Caco-2 (cell line): ENCODE measurements at regions of chr5 and their contacts with region 1.

Region 1: GRCh38 chr5:65925601-65926275 is 637 bp upstream of the ERBIN start:
- DNase-seq: peak; percentile 91 to 92
- H3K4me3 ChIP-seq: peak overlapping the region; percentile 98
- H3K4me3 Mint-ChIP-seq: peak overlapping the region; percentile 84
- H3K27ac Mint-ChIP-seq: peak overlapping the region; percentile 97
- H3K4me1 ChIP-seq: peaks cover 43% of the 10 kb centered on the region
- H3K4me1 Mint-ChIP-seq: peaks cover 31% of the 10 kb centered on the region
- H3K27me3 ChIP-seq: no peaks in the 10 kb centered on the region
- H3K27me3 Mint-ChIP-seq: no peaks in the 10 kb centered on the region
- CTCF ChIP-seq: peak; percentile 21 to 47

Region 2: DNA sequence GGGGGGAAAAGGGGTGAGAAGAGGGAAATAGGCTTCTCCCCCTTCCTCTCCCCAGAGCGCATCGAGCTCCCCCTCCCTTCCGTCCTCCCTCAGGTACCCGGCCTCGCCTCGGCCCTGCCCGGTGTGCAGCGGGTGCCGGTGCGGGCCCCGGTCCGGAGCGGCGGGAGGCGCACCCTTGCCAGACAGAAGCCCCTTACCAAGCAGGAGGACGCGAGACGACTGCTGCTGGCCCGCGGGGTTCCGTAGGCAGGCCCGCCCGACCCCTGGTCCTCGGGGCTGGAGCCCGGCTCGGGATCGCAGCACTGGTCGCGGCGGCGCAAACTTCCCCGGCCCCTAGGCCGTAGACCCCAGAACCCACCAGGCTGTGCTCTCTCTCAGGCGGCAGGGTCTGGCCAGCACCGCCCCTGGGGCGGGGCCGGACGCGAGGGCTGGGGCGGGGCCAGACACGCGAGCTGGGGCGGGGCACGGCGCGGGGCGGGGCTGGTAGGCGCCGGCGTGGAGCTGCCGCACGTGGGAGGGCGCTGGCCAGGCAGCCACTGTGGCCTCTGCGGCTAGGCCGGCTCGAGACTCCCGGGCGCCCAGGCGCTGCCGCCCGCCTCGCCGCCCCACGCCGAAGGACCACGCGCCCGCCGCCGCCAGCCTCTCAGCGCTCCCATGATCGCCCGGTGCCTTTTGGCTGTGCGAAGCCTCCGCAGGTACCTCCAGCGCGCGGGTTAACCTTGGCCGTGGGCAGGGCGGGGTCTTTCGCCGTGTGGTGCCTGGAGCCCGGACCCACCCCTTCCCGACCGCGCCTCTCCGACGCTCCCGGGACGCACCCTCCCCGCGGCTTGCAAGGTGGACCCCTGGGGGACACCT is 203.8 kb before region 1 on chr5 and contains the starts of genes NLN and SGTB:
- CTCF ChIA-PET with region 1: no interaction called
- POLR2A ChIA-PET with region 1: no interaction called
- intact Hi-C with region 1: loop called (anchors 2 kb)
- DNase-seq: peak; percentile 82 to 92
- H3K4me3 ChIP-seq: peak within 1 kb of the TSS; percentile 98
- H3K4me3 Mint-ChIP-seq: peak within 1 kb of the TSS; percentile 80
- H3K27ac Mint-ChIP-seq: peak within 1 kb of the TSS; percentile 77
- H3K4me1 ChIP-seq: peaks cover 14% of the 10 kb centered on the region
- H3K4me1 Mint-ChIP-seq: peaks cover 11% of the 10 kb centered on the region
- H3K27me3 ChIP-seq: no peaks in the 10 kb centered on the region
- H3K27me3 Mint-ChIP-seq: no peaks in the 10 kb centered on the region
- CTCF ChIP-seq: no peak
- total RNA-seq, gene NLN: 34.8 and 36.0 TPM in 2 replicates
- total RNA-seq, gene SGTB: 12.0 and 13.0 TPM in 2 replicates

Region 3: DNA sequence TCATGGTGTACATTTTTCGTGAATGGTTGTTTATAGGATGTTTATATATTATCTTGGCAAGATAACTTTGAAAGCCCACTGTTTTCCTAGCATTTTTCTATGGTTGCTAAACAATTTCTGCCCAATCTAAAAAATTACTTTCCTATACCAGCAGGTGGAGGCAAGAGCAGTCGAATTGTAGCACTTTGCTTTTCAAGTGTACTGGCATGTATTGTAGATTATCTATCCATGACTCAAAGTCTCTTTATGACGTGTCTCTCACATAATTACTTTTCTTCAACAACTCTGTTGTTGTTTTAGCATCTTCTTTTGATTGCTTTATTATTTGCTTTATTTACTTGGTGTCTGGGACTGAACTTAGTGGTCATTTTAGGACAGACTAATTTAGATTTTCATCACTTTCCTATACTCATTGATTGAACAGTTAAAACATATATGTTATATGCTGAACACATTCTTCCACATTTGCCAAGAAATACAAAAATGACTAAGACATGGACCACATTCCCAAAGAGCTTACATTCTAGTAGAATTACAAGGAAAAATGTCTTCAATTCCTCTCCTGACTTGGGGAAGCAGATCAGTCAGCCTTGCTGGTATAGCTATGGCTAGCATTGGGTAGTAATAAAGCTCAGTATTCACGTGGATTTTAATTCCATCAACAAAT is 183.0 kb before region 1 on chr5:
- CTCF ChIA-PET with region 1: no interaction called
- POLR2A ChIA-PET with region 1: no interaction called
- intact Hi-C with region 1: loop called (anchors 1 kb)
- DNase-seq: peak; percentile 42 to 47
- H3K4me3 ChIP-seq: no peak overlapping the region
- H3K4me3 Mint-ChIP-seq: no peak overlapping the region
- H3K27ac Mint-ChIP-seq: no peak overlapping the region
- H3K4me1 ChIP-seq: no peaks in the 10 kb centered on the region
- H3K4me1 Mint-ChIP-seq: peaks cover 22% of the 10 kb centered on the region
- H3K27me3 ChIP-seq: no peaks in the 10 kb centered on the region
- H3K27me3 Mint-ChIP-seq: no peaks in the 10 kb centered on the region
- CTCF ChIP-seq: peak; percentile 55 to 76

Region 4: GRCh38 chr5:66144074-66144833 is 218.5 kb after region 1 on chr5 and contains the start of gene SREK1:
- CTCF ChIA-PET with region 1: no interaction called
- POLR2A ChIA-PET with region 1: interaction called, 3 read pairs
- intact Hi-C with region 1: loop called (anchors 2 kb)
- DNase-seq: peak; percentile 92 to 95
- H3K4me3 ChIP-seq: peak within 1 kb of the TSS; percentile 67
- H3K4me3 Mint-ChIP-seq: peak within 1 kb of the TSS; percentile 87
- H3K27ac Mint-ChIP-seq: peak within 1 kb of the TSS; percentile 99
- H3K4me1 ChIP-seq: peaks cover 9% of the 10 kb centered on the region; the same call in 1 of the 2 replicates
- H3K4me1 Mint-ChIP-seq: no peaks in the 10 kb centered on the region
- H3K27me3 ChIP-seq: no peaks in the 10 kb centered on the region
- H3K27me3 Mint-ChIP-seq: peaks cover 6% of the 10 kb centered on the region
- CTCF ChIP-seq: no peak
- total RNA-seq, gene SREK1: 81.4 and 95.6 TPM in 2 replicates

Region 5: GRCh38 chr5:66171349-66172344 is 245.9 kb after region 1 on chr5:
- CTCF ChIA-PET with region 1: no interaction called
- POLR2A ChIA-PET with region 1: interaction called, 11 read pairs
- intact Hi-C with region 1: no loop called
- DNase-seq: peak in 1 of 2 experiments; percentile 48
- H3K4me3 ChIP-seq: no peak overlapping the region
- H3K4me3 Mint-ChIP-seq: no peak overlapping the region
- H3K27ac Mint-ChIP-seq: no peak overlapping the region
- H3K4me1 ChIP-seq: no peaks in the 10 kb centered on the region
- H3K4me1 Mint-ChIP-seq: peaks cover 7% of the 10 kb centered on the region
- H3K27me3 ChIP-seq: no peaks in the 10 kb centered on the region
- H3K27me3 Mint-ChIP-seq: no peaks in the 10 kb centered on the region
- CTCF ChIP-seq: peak; percentile 54 to 56